HEK293 (cell line): ENCODE measurements at regions of chr21 and their contacts with region 1.

Region 1: GRCh38 chr21:36319765-36320420 is at the start of gene MORC3:
- H3K4me3 ChIP-seq: peak within 1 kb of the TSS; percentile 83
- H3K27ac ChIP-seq: peak within 1 kb of the TSS; percentile 88
- H3K4me1 ChIP-seq: peaks cover 12% of the 10 kb centered on the region
- CTCF ChIP-seq: no peak

Region 2: GRCh38 chr21:36135391-36136102 is 184.3 kb before region 1 on chr21:
- CTCF ChIA-PET with region 1: interaction called, 5 read pairs
- POLR2A ChIA-PET with region 1: interaction called, 21 read pairs
- H3K4me3 ChIP-seq: peak overlapping the region; percentile 54
- H3K27ac ChIP-seq: peak overlapping the region; percentile 71
- H3K4me1 ChIP-seq: peaks cover 6% of the 10 kb centered on the region
- CTCF ChIP-seq: no peak

Region 3: DNA sequence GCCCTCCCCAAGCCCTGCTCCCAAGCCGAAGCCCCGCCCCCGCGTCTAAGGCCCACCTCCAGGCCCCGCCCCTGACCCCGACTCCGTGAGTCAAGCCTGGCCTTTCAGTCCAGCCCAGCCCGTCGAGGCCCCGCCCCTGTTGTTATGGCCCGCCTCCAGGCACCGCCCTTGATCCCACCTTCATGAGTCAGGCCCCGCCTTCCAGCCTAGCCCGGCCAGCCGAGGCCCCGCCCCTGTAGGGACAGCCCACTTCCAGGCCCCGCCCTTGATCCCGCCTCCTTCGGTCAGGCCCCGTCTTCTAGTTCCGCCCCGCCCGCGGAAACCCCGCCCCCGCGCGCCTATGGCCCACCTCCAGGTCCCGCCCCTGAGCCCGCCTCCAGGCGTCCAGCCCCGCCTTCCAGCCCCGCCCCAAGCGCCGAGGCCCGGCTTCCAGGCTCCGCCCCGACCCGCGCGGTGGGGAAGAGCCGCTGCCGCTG is 163.5 kb before region 1 on chr21:
- CTCF ChIA-PET with region 1: interaction called, 4 read pairs
- POLR2A ChIA-PET with region 1: interaction called, 23 read pairs
- H3K4me3 ChIP-seq: peak overlapping the region; percentile 73
- H3K27ac ChIP-seq: peak overlapping the region; percentile 73; the same call in 1 of the 2 replicates
- H3K4me1 ChIP-seq: no peaks in the 10 kb centered on the region
- CTCF ChIP-seq: no peak

Region 4: DNA sequence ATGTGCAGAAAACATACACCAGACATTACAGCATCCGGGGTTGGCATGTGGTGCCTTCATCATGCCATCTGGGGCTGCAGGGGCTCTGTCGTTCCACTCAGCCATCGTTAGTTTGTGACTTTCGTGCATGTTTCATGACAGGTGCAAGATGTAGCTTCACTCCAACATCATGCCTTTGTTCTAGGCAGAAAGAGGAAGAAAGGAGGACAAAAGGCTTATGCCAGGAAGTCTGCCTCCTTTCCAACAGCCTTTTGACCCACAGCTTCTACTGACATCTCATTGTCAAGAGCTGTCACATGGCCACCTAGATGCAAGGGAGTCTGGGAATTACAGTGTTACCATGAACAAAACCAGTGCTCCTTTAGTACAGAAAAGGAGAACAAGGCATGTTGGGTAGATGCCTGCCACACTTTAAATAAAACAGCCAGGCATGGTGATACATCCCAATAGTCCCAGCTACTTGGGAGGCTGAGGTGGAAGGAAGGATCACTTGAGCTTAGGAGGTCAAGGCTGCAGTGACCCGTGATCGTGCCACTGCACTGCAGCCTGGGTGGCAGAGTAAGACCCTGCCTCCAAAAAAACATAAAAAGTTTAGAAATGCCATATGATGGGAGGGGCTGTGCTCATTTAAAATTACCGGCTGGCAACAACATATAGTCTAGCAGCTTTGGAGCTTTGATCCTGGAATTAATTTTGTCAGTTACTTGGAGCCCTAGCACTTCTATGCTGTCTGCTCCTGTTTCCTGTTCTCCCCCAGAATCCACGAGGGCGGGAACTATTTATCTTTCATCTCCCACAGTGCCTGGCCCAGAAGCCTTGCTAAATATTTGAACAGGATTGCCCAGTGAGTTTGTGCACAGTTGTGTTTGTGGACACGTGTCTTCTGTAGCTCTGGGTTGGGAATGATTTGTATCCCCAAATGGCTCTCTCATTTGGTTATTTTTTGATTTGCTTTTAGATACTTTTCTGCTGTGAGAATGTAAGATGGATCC is 155.8 kb before region 1 on chr21:
- CTCF ChIA-PET with region 1: interaction called, 3 read pairs
- POLR2A ChIA-PET with region 1: interaction called, 15 read pairs
- H3K4me3 ChIP-seq: no peak overlapping the region
- H3K27ac ChIP-seq: no peak overlapping the region
- H3K4me1 ChIP-seq: peaks cover 9% of the 10 kb centered on the region
- CTCF ChIP-seq: no peak

Region 5: GRCh38 chr21:36297921-36298594 is 21.8 kb before region 1 on chr21:
- CTCF ChIA-PET with region 1: interaction called, 3 read pairs
- POLR2A ChIA-PET with region 1: interaction called, 15 read pairs
- H3K4me3 ChIP-seq: no peak overlapping the region
- H3K27ac ChIP-seq: no peak overlapping the region
- H3K4me1 ChIP-seq: no peaks in the 10 kb centered on the region
- CTCF ChIP-seq: no peak

Region 6: GRCh38 chr21:36330904-36331303 is 11.0 kb after region 1 on chr21:
- CTCF ChIA-PET with region 1: interaction called, 20 read pairs
- POLR2A ChIA-PET with region 1: interaction called, 28 read pairs
- H3K4me3 ChIP-seq: no peak overlapping the region
- H3K27ac ChIP-seq: no peak overlapping the region
- H3K4me1 ChIP-seq: peaks cover 6% of the 10 kb centered on the region; the same call in 1 of the 2 replicates
- CTCF ChIP-seq: no peak; the same call in 1 of the 2 replicates